Activated naive CD4-positive, alpha-beta T cell treated with anti-CD3 and anti-CD28 coated beads for 36 hours (primary cell): ENCODE measurements at regions of chr16 and their contacts with region 1.

Region 1: GRCh38 chr16:56191156-56191815 is at the start of gene GNAO1:
- DNase-seq: peak; percentile 41
- H3K4me3 Mint-ChIP-seq: peak within 1 kb of the TSS; percentile 72
- H3K27ac Mint-ChIP-seq: no peak within 1 kb of the TSS
- H3K4me1 Mint-ChIP-seq: peaks cover 23% of the 10 kb centered on the region
- H3K27me3 Mint-ChIP-seq: peaks cover 70% of the 10 kb centered on the region
- total RNA-seq, gene GNAO1: 0.25 to 0.50 TPM

Region 2: DNA sequence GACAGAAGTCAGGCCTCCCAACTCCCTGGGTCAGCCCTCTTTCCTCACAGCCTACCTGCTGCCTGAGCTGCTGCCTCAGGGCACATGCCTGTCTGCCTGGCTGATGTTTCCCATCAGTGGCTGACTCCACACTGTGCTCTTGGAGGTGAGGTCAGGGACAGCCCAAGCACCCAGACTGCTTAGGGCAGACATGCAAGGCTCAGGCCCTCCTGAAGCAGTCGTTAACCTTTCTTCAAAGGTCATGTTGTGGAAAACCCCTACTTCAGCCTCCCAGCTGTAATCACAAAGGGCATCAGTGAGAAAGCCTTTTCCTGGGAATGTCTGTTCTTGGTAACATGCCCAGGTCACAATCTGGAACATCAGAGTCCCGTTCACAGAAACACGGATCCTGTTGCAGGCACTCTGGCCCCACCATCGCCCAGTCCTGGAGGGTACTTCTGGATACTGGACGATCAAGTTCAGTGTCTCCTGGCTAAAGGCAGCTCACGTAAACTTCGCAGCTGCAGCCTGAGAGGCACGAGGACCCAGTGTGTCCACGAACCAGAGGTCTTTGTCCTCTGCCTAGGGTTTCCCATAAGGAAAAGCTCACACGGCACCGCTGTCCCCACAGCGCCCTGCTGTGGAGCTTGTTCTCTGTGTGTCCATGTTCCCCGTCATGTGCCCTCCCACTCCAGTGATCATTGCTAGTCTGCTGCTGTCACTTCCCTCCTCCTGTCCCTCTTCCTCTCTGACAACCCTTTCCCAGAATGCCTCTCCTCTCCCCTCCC is 54.9 kb after region 1 on chr16:
- CTCF ChIA-PET with region 1: no interaction called
- intact Hi-C with region 1: no loop called
- DNase-seq: no peak
- H3K4me3 Mint-ChIP-seq: no peak overlapping the region
- H3K27ac Mint-ChIP-seq: no peak overlapping the region
- H3K4me1 Mint-ChIP-seq: no peaks in the 10 kb centered on the region
- H3K27me3 Mint-ChIP-seq: no peaks in the 10 kb centered on the region

Region 3: DNA sequence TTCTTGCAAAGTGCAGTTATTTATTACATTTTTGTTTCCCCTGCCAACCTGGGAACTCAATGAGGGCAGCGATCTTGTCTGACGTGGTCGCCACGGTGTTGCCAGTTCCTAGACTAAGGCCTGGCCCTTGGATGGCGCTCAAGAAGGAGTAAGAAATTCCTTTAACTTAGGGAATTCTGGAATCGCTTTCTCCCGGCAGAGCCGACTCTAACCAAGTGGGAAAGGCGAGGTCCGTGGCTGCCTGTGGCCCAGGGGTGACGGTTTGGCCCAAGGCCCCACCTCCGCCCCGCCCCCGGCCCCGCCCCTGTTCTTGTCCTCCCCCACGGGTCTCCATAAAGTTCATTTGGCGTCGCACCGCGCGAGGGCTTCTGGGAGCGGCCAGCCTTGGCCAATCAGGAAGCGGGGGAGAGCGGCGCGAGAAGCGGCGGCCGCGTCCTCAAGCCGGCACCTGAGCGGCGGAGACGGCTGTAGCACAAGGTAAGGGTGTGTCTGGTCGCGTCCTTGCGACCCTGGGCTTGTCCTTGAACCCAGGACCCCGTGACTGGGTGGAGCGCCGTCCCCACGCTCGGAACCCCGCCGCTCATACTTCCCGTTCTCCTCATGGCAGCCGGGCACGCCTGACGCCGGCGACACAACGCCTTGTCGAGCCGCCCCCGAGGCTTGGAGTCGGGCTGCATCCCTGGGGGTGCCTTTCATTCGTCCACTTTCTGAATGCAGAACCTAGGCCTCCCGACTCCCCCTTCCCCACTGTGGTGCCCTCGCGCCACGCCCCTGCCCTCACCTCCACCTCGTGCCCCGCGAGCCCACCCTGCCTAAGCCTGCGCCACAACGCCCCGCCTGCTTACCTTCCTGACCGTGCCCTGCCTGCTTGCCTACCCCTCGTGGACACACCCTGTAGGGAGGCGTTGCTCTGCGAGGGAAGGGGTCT is 538.7 kb after region 1 on chr16 and contains the start of gene NUP93:
- CTCF ChIA-PET with region 1: no interaction called
- intact Hi-C with region 1: loop called (anchors 10 kb)
- DNase-seq: peak; percentile 94
- H3K4me3 Mint-ChIP-seq: no peak within 1 kb of the TSS
- H3K27ac Mint-ChIP-seq: peak within 1 kb of the TSS; percentile 78
- H3K4me1 Mint-ChIP-seq: peaks cover 14% of the 10 kb centered on the region
- H3K27me3 Mint-ChIP-seq: no peaks in the 10 kb centered on the region
- total RNA-seq, gene NUP93: 161 to 172 TPM